ENCODE measurements at regions of chr17 and their contacts with region 1.

Region 1: GRCh38 chr17:77331301-77331864 is 190.6 kb downstream of the SEC14L1 start:
- DNase-seq: peak; percentile 87
- ATAC-seq: peak; percentile 95
- H3K4me3 ChIP-seq: no peak overlapping the region
- H3K27ac ChIP-seq: peak overlapping the region; percentile 71
- H3K4me1 ChIP-seq: peaks cover 3% of the 10 kb centered on the region
- H3K27me3 ChIP-seq: no peaks in the 10 kb centered on the region
- CTCF ChIP-seq: peak; percentile 96
- POLR2A ChIP-seq: peak; percentile 45; the same call in 1 of the 2 replicates
- RAD21 ChIP-seq: peak; percentile 99

Region 2: GRCh38 chr17:77494664-77495435 is 163.5 kb after region 1 on chr17:
- CTCF ChIA-PET with region 1: interaction called, 3 read pairs
- POLR2A ChIA-PET with region 1: no interaction called
- dilution Hi-C with region 1: no loop called
- in situ Hi-C with region 1: loop called (anchors 5 kb)
- intact Hi-C with region 1: loop called (anchors 1 kb)
- DNase-seq: peak; percentile 68
- ATAC-seq: peak; percentile 87
- H3K4me3 ChIP-seq: no peak overlapping the region
- H3K27ac ChIP-seq: no peak overlapping the region
- H3K4me1 ChIP-seq: peaks cover 3% of the 10 kb centered on the region; the same call in 1 of the 2 replicates
- H3K27me3 ChIP-seq: no peaks in the 10 kb centered on the region
- CTCF ChIP-seq: peak; percentile 85
- POLR2A ChIP-seq: no peak
- RAD21 ChIP-seq: peak; percentile 94

Measured in IMR-90 (cell line).